B cell (primary cell): ENCODE measurements at regions of chr20 and their contacts with region 1.

Region 1: DNA sequence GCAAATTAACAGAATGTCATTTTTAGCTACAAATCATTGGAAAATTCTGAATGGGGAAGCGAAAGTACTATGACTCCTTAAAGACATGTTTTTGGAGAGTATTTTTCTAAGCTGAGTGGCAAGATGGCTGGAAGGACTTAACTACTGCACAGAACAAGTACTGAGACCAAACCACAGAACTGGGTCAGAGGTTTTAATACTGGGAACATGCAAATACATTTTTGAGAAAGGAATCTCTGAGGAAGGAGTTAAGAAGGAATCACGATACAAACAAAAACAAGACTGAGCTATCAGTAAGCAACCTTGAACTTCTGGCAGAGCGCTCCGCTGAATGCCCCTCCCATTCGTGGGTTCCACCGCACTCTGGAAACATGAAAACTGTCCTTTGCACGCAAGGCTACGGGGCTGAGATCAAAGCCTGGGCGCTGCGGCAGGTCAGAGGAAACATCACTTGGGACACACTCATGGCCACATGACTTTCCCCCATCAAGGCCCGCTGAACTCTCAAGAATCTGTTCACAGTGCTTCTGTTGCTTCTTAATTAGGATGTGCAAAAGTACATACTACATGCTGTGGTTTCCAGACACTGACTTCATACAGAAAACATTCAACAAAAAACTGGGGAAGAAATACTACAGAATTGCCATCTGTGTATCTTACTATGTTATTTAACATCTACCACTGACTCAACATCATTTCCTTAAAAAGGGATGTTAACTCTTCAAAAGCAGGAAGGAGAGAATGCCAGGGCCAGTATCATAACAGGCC is 27.8 kb downstream of the SLC23A2 start:
- DNase-seq: peak; percentile 66
- ATAC-seq: peak; percentile 83
- H3K4me3 ChIP-seq: peak overlapping the region in 4 of 5 experiments; percentile 16 to 58 (median 40)
- H3K4me3 Mint-ChIP-seq: peak overlapping the region; percentile 87
- H3K27ac ChIP-seq: peak overlapping the region; percentile 36 to 40
- H3K27ac Mint-ChIP-seq: peak overlapping the region; percentile 84
- H3K4me1 ChIP-seq: peaks cover 21 to 30% of the 10 kb centered on the region in 2 donors
- H3K4me1 Mint-ChIP-seq: peaks cover 46% of the 10 kb centered on the region
- H3K27me3 ChIP-seq: no peaks in the 10 kb centered on the region
- H3K27me3 Mint-ChIP-seq: no peaks in the 10 kb centered on the region
- CTCF ChIP-seq: no peak

Region 2: DNA sequence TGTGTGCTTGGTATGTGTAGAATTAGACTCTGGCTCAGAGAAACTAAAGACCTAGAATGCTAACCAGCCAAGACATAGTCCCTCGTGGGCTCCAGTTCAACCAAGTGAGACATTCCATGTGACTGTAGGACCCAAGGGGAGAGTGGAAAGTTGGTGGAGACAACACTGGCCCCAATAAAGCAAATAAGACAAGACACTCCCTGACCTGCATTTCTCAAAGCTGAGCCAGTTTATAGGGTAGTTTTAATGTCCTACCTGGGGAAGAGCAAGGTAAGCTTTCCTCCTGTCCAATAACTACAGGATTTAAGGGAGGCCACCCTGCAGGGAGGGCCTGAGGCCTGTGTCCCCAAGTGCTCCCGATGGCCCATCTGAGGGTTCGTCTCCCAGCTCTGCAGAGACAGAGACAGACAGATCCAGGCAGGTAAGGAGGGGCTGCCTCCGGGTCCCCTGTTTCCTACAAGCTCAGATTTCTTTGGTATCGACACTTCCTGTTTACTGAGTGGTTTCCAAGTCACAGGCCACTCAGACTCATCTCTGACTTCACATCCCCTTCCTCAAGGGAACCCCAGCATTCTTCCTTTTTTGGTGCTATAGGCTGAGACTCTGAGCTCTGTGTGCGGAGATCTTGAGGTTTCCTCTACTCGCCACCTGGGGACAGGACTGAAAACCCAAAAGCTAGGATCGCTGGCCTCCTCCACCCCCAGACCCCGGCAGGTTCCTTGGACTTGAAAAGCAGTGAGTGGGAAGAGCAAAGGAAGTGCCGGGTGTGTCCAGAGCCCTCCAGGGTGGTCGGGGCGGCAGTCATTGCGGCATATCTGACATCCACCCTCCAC is 159.4 kb before region 1 on chr20:
- CTCF ChIA-PET with region 1: interaction called, 6 read pairs
- POLR2A ChIA-PET with region 1: interaction called, 5 read pairs
- intact Hi-C with region 1: loop called (anchors 5 kb)
- DNase-seq: peak; percentile 94
- ATAC-seq: peak; percentile 48
- H3K4me3 ChIP-seq: peak overlapping the region; percentile 49 to 67 (median 50)
- H3K4me3 Mint-ChIP-seq: peak overlapping the region; percentile 92
- H3K27ac ChIP-seq: peak overlapping the region; percentile 99
- H3K27ac Mint-ChIP-seq: peak overlapping the region; percentile 99
- H3K4me1 ChIP-seq: peaks cover 69 to 82% of the 10 kb centered on the region in 2 donors
- H3K4me1 Mint-ChIP-seq: peaks cover 87% of the 10 kb centered on the region
- H3K27me3 ChIP-seq: no peaks in the 10 kb centered on the region
- H3K27me3 Mint-ChIP-seq: no peaks in the 10 kb centered on the region
- CTCF ChIP-seq: peak; percentile 12

Region 3: GRCh38 chr20:4916971-4917881 is 56.3 kb before region 1 on chr20:
- CTCF ChIA-PET with region 1: no interaction called
- POLR2A ChIA-PET with region 1: no interaction called
- intact Hi-C with region 1: no loop called
- DNase-seq: no peak
- ATAC-seq: no peak
- H3K4me3 ChIP-seq: no peak overlapping the region
- H3K4me3 Mint-ChIP-seq: no peak overlapping the region
- H3K27ac ChIP-seq: no peak overlapping the region
- H3K27ac Mint-ChIP-seq: peak overlapping the region; percentile 26
- H3K4me1 ChIP-seq: no peaks in the 10 kb centered on the region
- H3K4me1 Mint-ChIP-seq: peaks cover 43% of the 10 kb centered on the region
- H3K27me3 ChIP-seq: no peaks in the 10 kb centered on the region
- H3K27me3 Mint-ChIP-seq: no peaks in the 10 kb centered on the region
- CTCF ChIP-seq: no peak

Region 4: DNA sequence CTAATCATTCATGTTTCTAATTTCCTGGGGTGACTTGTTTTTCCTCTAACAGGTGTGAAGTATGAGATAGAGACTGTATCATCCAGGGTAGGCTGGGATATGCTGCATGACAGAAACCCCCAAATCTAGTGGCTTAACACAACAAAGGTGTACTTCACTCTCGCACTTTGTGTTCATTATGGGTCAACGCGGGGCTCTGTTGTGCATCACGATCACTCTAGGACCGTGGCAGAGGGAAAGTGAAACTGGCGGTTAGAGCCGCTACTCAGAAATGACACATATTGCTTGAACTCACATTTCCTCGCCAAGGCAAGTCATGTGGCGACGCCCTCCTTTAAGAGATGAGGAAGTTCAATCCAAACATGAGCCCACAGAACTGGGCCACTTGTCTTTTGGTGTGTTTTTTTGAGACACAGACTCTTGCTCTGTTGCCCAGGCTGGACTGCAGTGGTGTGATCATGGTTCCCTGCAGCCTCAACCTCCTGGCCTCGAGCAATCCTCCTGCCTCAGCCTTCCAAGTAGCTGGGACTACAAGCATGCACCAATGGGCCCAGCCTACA is 105.0 kb after region 1 on chr20:
- CTCF ChIA-PET with region 1: no interaction called
- POLR2A ChIA-PET with region 1: no interaction called
- intact Hi-C with region 1: loop called (anchors 5 kb)
- DNase-seq: peak; percentile 91
- ATAC-seq: peak; percentile 96
- H3K4me3 ChIP-seq: peak overlapping the region; percentile 23 to 68 (median 50)
- H3K4me3 Mint-ChIP-seq: peak overlapping the region; percentile 85
- H3K27ac ChIP-seq: peak overlapping the region; percentile 85 to 93
- H3K27ac Mint-ChIP-seq: peak overlapping the region; percentile 94
- H3K4me1 ChIP-seq: peaks cover 37 to 50% of the 10 kb centered on the region in 2 donors
- H3K4me1 Mint-ChIP-seq: peaks cover 51% of the 10 kb centered on the region
- H3K27me3 ChIP-seq: no peaks in the 10 kb centered on the region
- H3K27me3 Mint-ChIP-seq: no peaks in the 10 kb centered on the region
- CTCF ChIP-seq: no peak

Region 5: DNA sequence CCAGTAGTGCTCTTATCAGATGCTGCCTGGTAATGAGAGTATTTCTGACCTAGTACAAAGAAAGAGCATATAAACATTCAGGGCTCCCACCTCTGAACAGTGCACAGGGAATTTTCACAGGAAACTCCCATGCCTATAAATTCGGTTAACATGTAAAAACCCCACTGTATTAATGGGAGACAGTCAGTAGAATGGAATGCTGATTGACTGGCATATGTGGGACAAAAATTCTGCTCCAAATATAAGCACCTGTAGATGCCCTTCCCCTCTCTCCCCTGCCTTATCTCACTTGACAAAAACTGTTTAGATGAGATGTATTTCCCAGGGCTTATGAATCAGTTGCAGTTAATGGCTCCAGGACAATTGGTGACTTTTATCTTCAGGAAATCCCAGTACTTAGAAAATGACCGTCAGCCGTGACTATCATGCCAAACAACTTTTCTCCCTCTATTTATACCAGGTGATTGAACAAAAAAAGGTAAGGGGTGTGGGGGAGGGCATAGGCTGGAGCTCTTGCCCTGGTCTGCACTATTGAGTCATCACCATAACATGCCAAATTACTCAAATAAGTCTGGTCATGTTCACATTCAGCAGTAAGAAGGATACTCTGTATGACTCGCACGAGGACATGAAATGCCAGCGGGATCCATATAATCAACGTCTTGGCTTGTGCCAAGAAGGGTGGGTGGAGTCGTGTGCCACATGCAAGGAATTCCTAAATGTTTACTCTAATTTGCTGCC is 1617.5 kb after region 1 on chr20:
- CTCF ChIA-PET with region 1: no interaction called
- POLR2A ChIA-PET with region 1: no interaction called
- intact Hi-C with region 1: no loop called
- DNase-seq: no peak
- ATAC-seq: no peak
- H3K4me3 ChIP-seq: no peak overlapping the region
- H3K4me3 Mint-ChIP-seq: no peak overlapping the region
- H3K27ac ChIP-seq: no peak overlapping the region
- H3K27ac Mint-ChIP-seq: no peak overlapping the region
- H3K4me1 ChIP-seq: no peaks in the 10 kb centered on the region
- H3K4me1 Mint-ChIP-seq: no peaks in the 10 kb centered on the region
- H3K27me3 ChIP-seq: no peaks in the 10 kb centered on the region
- H3K27me3 Mint-ChIP-seq: no peaks in the 10 kb centered on the region
- CTCF ChIP-seq: no peak